Endothelial cell of umbilical vein (primary cell): ENCODE measurements at regions of chr13 and their contacts with region 1.

Region 1: GRCh38 chr13:19633479-19634255 is at the start of gene MPHOSPH8:
- DNase-seq: peak; percentile 96
- H3K4me3 ChIP-seq: peak within 1 kb of the TSS; percentile 76 to 93 (median 84)
- H3K27ac ChIP-seq: peak within 1 kb of the TSS; percentile 50
- H3K4me1 ChIP-seq: peaks cover 19% of the 10 kb centered on the region
- H3K27me3 ChIP-seq: no peaks in the 10 kb centered on the region
- CTCF ChIP-seq: no peak
- POLR2A ChIP-seq: no peak
- total RNA-seq, gene MPHOSPH8: 27.5 and 31.5 TPM in 2 replicates

Region 2: GRCh38 chr13:19601749-19602725 is 31.6 kb before region 1 on chr13:
- CTCF ChIA-PET with region 1: no interaction called
- POLR2A ChIA-PET with region 1: no interaction called
- dilution Hi-C with region 1: no loop called
- intact Hi-C with region 1: loop called (anchors 1 kb)
- DNase-seq: peak; percentile 52
- H3K4me3 ChIP-seq: peak overlapping the region; percentile 46 to 68 (median 63)
- H3K27ac ChIP-seq: peak overlapping the region; percentile 29
- H3K4me1 ChIP-seq: peaks cover 10% of the 10 kb centered on the region
- H3K27me3 ChIP-seq: no peaks in the 10 kb centered on the region
- CTCF ChIP-seq: peak in 1 of 2 donors; percentile 39
- POLR2A ChIP-seq: no peak

Region 3: GRCh38 chr13:19618925-19619324 is 14.7 kb before region 1 on chr13:
- CTCF ChIA-PET with region 1: interaction called, 15 read pairs
- POLR2A ChIA-PET with region 1: no interaction called
- dilution Hi-C with region 1: no loop called
- intact Hi-C with region 1: no loop called
- DNase-seq: peak; percentile 48
- H3K4me3 ChIP-seq: no peak overlapping the region
- H3K27ac ChIP-seq: no peak overlapping the region
- H3K4me1 ChIP-seq: no peaks in the 10 kb centered on the region
- H3K27me3 ChIP-seq: no peaks in the 10 kb centered on the region
- CTCF ChIP-seq: peak; percentile 52 to 68
- POLR2A ChIP-seq: no peak

Region 4: DNA sequence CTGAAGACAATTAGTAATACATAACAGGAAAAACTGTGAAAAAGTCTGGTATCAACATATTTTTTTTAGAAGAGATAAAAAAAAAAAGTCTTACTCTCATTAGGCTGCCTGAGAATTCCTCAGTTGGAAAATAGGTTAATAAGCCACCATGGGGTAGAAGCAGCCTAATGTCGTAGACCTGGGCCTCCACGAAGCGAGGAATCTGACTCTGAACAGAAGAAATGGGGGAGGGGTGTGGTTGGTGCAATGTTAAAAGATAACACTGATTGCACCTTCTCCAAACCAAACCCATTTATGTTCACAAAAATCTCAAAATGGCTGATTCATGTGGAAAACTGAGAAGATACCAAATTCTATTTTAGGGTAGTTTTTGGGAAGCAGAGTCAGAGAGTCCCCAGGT is 62.2 kb after region 1 on chr13:
- CTCF ChIA-PET with region 1: no interaction called
- POLR2A ChIA-PET with region 1: no interaction called
- dilution Hi-C with region 1: no loop called
- intact Hi-C with region 1: no loop called
- DNase-seq: no peak
- H3K4me3 ChIP-seq: no peak overlapping the region
- H3K27ac ChIP-seq: no peak overlapping the region
- H3K4me1 ChIP-seq: peaks cover 11% of the 10 kb centered on the region
- H3K27me3 ChIP-seq: no peaks in the 10 kb centered on the region
- CTCF ChIP-seq: no peak
- POLR2A ChIP-seq: no peak

Region 5: DNA sequence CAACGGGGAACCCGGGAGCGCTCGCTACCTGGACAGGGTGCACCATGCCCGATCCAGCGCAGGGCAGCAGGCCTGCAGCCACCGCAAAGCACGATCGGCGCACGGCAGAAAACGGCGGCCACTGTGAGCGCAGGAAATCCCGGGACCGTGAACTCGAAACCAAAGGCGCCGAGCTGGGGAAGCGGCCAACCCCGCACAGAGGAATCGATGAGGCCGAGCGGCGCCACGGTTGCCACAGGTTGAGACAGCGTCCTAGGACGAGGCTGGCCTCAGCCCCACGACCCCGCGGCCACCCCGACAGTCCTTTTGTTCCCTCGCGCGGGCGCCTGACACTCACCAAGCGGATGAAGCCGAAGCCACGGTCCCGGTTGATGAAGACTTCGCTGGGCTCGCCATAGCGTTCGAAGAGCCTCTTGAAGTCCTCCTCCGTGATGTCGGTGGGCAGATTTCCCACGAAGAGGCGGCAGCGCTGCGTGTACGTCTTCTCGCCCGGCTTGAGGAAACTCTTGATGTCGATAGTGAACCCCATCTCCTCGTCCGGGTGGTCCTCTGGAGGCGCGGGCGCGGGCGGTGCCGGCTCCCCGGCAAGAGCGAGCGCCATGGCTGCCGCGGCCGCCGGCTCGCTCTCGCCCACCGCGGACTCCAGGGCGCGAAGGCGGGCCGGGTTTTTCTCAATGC is 148.5 kb after region 1 on chr13:
- CTCF ChIA-PET with region 1: no interaction called
- POLR2A ChIA-PET with region 1: no interaction called
- dilution Hi-C with region 1: no loop called
- intact Hi-C with region 1: loop called (anchors 2 kb)
- DNase-seq: peak; percentile 75
- H3K4me3 ChIP-seq: peak overlapping the region; percentile 78 to 95 (median 93)
- H3K27ac ChIP-seq: peak overlapping the region; percentile 85
- H3K4me1 ChIP-seq: peaks cover 3% of the 10 kb centered on the region
- H3K27me3 ChIP-seq: no peaks in the 10 kb centered on the region
- CTCF ChIP-seq: no peak
- POLR2A ChIP-seq: no peak

Region 6: GRCh38 chr13:19818210-19818842 is 184.7 kb after region 1 on chr13:
- CTCF ChIA-PET with region 1: interaction called, 8 read pairs
- POLR2A ChIA-PET with region 1: no interaction called
- dilution Hi-C with region 1: no loop called
- intact Hi-C with region 1: loop called (anchors 5 kb)
- DNase-seq: peak; percentile 37
- H3K4me3 ChIP-seq: no peak overlapping the region
- H3K27ac ChIP-seq: no peak overlapping the region
- H3K4me1 ChIP-seq: no peaks in the 10 kb centered on the region
- H3K27me3 ChIP-seq: no peaks in the 10 kb centered on the region
- CTCF ChIP-seq: peak; percentile 77 to 80
- POLR2A ChIP-seq: no peak